ENCODE measurements at regions of chr14 and their contacts with region 1.

Region 1: GRCh38 chr14:91911474-91912032 is 35.9 kb downstream of the FBLN5 start:
- DNase-seq: peak; percentile 38 to 47
- H3K4me3 ChIP-seq: no peak overlapping the region
- H3K27ac ChIP-seq: no peak overlapping the region
- H3K4me1 ChIP-seq: no peaks in the 10 kb centered on the region
- H3K27me3 ChIP-seq: no peaks in the 10 kb centered on the region
- CTCF ChIP-seq: peak in 5 of 6 experiments; percentile 24 to 82 (median 52)
- POLR2A ChIP-seq: no peak

Region 2: GRCh38 chr14:91649930-91650329 is 261.6 kb before region 1 on chr14:
- intact Hi-C with region 1: loop called (anchors 5 kb)
- DNase-seq: peak; percentile 3 to 21
- H3K4me3 ChIP-seq: no peak overlapping the region
- H3K27ac ChIP-seq: no peak overlapping the region
- H3K4me1 ChIP-seq: no peaks in the 10 kb centered on the region
- H3K27me3 ChIP-seq: no peaks in the 10 kb centered on the region
- CTCF ChIP-seq: peak; percentile 12 to 83 (median 55)
- POLR2A ChIP-seq: no peak